ENCODE measurements at regions of chr1 and their contacts with region 1.

Region 1: DNA sequence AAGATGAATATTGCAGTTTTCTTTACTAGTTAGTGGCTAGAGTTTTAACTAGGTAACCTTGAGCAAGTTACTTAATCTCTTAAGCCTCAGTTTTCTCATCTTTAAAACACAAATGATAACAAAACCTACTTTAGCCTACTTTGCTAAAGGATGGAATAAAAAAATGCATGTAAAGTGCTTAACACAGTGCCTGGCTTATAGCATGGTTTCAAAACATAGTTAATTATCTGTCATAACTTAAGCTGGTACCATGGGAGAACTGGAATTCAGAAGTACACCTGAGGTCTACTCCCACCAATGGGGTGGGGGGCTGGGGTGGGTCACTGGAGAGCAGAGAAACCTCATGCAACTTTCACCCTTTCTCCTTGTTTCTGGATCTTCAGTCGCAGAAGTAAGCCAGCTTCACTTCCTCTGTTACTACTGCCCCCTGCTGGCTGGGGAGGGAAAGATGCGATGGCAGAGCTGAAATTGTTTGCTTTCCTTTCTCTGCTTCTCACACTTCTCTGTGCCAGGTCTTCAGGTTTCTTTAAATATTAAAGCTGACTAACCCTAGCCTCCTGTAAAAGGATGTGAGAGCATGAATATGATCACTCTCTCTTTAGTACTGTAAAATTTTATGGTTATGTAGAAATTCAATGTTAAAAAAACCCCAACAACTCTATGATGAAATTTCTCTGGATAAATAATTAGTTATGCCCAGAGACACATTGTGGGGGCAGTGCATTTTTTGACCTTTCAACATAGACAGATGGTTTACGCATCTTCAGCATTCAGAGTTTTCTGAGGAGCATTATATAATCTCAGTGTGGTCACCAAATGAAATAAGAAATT is 324.2 kb downstream of the HLX start:
- DNase-seq: peak; percentile 82
- ATAC-seq: peak; percentile 73
- H3K4me3 Mint-ChIP-seq: no peak overlapping the region
- H3K27ac Mint-ChIP-seq: no peak overlapping the region
- H3K4me1 Mint-ChIP-seq: no peaks in the 10 kb centered on the region
- H3K27me3 Mint-ChIP-seq: no peaks in the 10 kb centered on the region
- CTCF ChIP-seq: peak; percentile 85

Region 2: GRCh38 chr1:221174330-221174999 is 29.0 kb before region 1 on chr1:
- CTCF ChIA-PET with region 1: interaction called, 13 read pairs
- POLR2A ChIA-PET with region 1: no interaction called
- DNase-seq: peak; percentile 38
- ATAC-seq: peak; percentile 93
- H3K4me3 Mint-ChIP-seq: no peak overlapping the region
- H3K27ac Mint-ChIP-seq: no peak overlapping the region
- H3K4me1 Mint-ChIP-seq: peaks cover 18% of the 10 kb centered on the region
- H3K27me3 Mint-ChIP-seq: no peaks in the 10 kb centered on the region
- CTCF ChIP-seq: no peak

Region 3: GRCh38 chr1:221335161-221336101 is 132.0 kb after region 1 on chr1:
- CTCF ChIA-PET with region 1: no interaction called
- POLR2A ChIA-PET with region 1: no interaction called
- DNase-seq: no peak
- ATAC-seq: no peak
- H3K4me3 Mint-ChIP-seq: no peak overlapping the region
- H3K27ac Mint-ChIP-seq: no peak overlapping the region
- H3K4me1 Mint-ChIP-seq: 0 out of 2 replicates have a peak, but pooled peaks cover 3% of the 10 kb centered on the region
- H3K27me3 Mint-ChIP-seq: no peaks in the 10 kb centered on the region
- CTCF ChIP-seq: no peak

Measured in WTC11 (cell line).